ENCODE measurements at regions of chr2 and their contacts with region 1.

Region 1: GRCh38 chr2:161063157-161063954 is 96.9 kb upstream of the TANK start:
- DNase-seq: peak; percentile 86
- H3K4me3 Mint-ChIP-seq: no peak overlapping the region
- H3K27ac Mint-ChIP-seq: no peak overlapping the region
- H3K4me1 Mint-ChIP-seq: peaks cover 6% of the 10 kb centered on the region
- H3K27me3 Mint-ChIP-seq: no peaks in the 10 kb centered on the region
- CTCF ChIP-seq: peak; percentile 86

Region 2: DNA sequence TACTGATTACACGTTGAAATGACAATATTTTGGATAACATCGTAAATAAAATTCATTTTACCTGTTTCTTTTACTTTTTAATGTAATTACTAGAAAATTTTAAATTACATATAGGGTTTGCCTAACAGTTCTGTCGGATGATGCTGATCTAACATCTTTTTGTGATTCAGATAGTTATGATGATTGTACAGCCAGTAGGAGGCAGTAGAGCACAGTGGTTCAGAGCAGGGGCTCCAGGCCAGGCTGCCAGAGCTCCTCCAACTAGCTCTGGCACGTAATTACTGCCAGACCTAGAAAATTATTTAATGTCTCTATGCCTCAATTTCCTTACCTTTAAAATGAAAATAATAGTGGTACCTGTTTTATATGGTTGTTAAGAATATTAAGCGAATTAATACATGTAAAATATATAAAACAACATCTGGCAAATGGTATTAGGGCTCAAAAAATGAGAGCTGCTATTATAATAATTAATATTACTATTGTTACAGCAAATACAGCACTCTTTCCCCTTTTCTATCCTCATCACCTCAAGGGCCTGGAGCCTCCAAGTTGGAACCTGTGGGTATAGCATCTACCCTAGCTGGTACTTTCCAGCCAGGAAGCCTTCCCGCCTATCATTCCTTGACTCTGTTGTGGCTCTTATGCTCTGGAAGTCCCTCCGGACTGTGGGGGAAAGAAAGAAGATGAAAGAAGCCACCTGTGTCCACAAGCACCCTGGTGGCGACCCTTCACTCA is 953.3 kb before region 1 on chr2:
- CTCF ChIA-PET with region 1: interaction called, 4 read pairs
- POLR2A ChIA-PET with region 1: no interaction called
- intact Hi-C with region 1: loop called (anchors 2 kb)
- DNase-seq: peak; percentile 82
- H3K4me3 Mint-ChIP-seq: no peak overlapping the region
- H3K27ac Mint-ChIP-seq: peak overlapping the region; percentile 82
- H3K4me1 Mint-ChIP-seq: peaks cover 17% of the 10 kb centered on the region
- H3K27me3 Mint-ChIP-seq: no peaks in the 10 kb centered on the region
- CTCF ChIP-seq: peak; percentile 80

Region 3: DNA sequence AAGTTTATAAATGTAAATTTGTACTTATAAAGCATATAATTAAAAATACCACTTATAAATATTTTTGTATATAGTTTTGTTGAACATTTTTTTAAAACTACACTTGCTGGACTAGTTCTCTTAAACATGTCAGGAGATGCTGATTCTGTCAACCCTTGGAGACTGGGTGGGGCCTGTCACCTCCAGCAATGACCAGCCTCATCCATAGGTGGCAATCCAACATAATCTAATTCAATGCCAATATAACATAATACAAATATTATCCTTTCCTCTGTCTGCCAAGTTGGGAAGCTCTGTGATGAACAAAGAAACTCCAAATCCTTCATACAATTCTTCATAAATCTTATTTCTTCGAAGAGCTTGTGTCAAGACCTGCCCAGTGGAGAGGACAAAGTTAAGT is 710.2 kb before region 1 on chr2:
- CTCF ChIA-PET with region 1: interaction called, 11 read pairs
- POLR2A ChIA-PET with region 1: no interaction called
- intact Hi-C with region 1: no loop called
- DNase-seq: peak; percentile 54
- H3K4me3 Mint-ChIP-seq: no peak overlapping the region
- H3K27ac Mint-ChIP-seq: peak overlapping the region; percentile 38
- H3K4me1 Mint-ChIP-seq: peaks cover 63% of the 10 kb centered on the region
- H3K27me3 Mint-ChIP-seq: no peaks in the 10 kb centered on the region
- CTCF ChIP-seq: peak; percentile 40

Region 4: GRCh38 chr2:160756481-160756880 is 306.9 kb before region 1 on chr2:
- CTCF ChIA-PET with region 1: no interaction called
- POLR2A ChIA-PET with region 1: no interaction called
- intact Hi-C with region 1: no loop called
- DNase-seq: no peak
- H3K4me3 Mint-ChIP-seq: no peak overlapping the region
- H3K27ac Mint-ChIP-seq: no peak overlapping the region
- H3K4me1 Mint-ChIP-seq: peaks cover 8% of the 10 kb centered on the region
- H3K27me3 Mint-ChIP-seq: no peaks in the 10 kb centered on the region
- CTCF ChIP-seq: no peak

Region 5: DNA sequence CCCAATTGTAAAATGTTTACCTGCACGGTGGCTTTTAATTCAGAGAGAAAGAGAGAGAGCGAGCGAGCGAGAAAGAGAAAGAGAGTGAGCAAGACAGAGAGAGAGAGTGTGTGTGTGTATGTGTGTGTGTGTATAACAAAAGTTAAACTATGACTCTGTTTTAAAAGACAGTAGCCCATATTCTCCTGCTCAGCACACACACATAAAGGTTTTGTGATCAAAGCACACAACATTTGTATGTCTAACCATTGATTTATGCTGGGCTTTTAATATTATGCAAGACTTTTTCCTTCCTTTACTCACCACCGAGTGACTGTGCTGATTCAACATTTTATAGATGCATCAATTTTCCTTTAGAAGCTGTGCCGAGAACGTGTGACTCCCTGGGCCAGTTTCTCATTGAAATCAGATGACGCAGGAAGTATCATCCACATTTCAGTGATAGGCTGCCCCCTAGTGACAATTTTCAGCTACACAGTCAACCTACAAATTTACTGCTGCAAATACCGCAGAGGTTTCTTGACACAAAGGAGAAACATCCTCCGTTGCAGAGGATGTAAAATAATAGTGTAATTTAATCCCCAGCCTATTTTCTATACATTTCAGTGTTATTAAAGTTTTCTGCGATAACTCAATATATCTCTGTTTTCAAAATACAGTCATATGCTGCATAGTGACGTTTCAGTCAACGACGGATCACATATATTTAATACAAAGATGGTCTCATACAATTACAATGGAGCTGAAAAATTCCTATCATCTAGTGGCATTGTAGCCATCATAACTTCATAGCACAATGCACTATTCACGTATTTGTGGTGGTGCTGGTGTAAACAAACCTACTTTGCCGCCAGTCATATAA is 69.0 kb before region 1 on chr2:
- CTCF ChIA-PET with region 1: interaction called, 30 read pairs
- POLR2A ChIA-PET with region 1: interaction called, 3 read pairs
- intact Hi-C with region 1: loop called (anchors 2 kb)
- DNase-seq: peak; percentile 87
- H3K4me3 Mint-ChIP-seq: no peak overlapping the region
- H3K27ac Mint-ChIP-seq: no peak overlapping the region
- H3K4me1 Mint-ChIP-seq: peaks cover 9% of the 10 kb centered on the region
- H3K27me3 Mint-ChIP-seq: no peaks in the 10 kb centered on the region
- CTCF ChIP-seq: peak; percentile 76

Region 6: GRCh38 chr2:161030260-161031063 is 32.9 kb before region 1 on chr2:
- CTCF ChIA-PET with region 1: interaction called, 20 read pairs
- POLR2A ChIA-PET with region 1: interaction called, 4 read pairs
- intact Hi-C with region 1: no loop called
- DNase-seq: peak; percentile 97
- H3K4me3 Mint-ChIP-seq: peak overlapping the region; percentile 0
- H3K27ac Mint-ChIP-seq: peak overlapping the region; percentile 84
- H3K4me1 Mint-ChIP-seq: peaks cover 24% of the 10 kb centered on the region
- H3K27me3 Mint-ChIP-seq: no peaks in the 10 kb centered on the region
- CTCF ChIP-seq: no peak

Region 7: GRCh38 chr2:161052214-161052613 is 11.1 kb before region 1 on chr2:
- CTCF ChIA-PET with region 1: interaction called, 18 read pairs
- POLR2A ChIA-PET with region 1: no interaction called
- intact Hi-C with region 1: no loop called
- DNase-seq: no peak
- H3K4me3 Mint-ChIP-seq: no peak overlapping the region
- H3K27ac Mint-ChIP-seq: no peak overlapping the region
- H3K4me1 Mint-ChIP-seq: no peaks in the 10 kb centered on the region
- H3K27me3 Mint-ChIP-seq: peaks cover 13% of the 10 kb centered on the region
- CTCF ChIP-seq: no peak

Region 8: DNA sequence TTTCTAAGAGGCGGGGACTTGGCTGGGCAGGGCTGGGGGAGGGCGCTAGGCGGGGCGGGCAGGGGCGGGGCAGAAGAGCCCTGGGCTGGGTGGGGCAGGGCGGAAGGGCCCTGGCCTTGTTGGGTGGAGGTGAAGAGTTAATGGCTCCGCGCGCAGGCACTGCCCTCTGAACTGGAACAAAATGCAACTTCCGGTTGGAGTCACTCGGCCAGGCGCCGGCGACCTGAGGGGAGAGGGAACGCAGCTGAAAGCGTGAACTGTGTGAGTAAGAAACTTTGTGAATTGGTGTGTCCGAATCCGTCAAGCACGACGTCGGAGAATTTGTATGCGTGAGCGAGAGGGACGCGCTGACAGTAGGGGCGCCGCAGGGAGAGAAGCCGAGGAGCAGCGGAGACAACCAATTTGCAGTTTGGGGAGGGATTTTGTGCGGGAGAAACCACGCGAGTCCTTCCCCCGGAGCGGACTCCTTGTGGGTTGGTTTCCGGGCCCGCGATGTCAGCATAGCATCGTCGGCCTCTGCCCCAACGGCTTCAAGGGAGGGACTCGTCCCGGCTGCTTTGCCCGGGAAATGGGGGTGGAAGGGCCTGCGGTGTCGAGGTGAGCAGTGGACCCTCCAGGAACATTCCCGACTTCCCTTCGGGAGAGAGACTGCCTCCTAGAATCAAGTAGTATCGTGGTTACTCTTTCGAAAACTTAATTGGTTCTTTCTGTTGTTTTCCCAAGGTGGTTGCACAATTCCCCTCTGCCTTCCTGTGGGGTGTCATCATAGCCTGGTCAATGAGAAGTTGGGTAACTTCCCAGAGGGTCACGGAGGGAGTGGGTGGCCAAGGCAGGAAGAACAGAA is 97.1 kb after region 1 on chr2 and contains the start of gene TANK:
- CTCF ChIA-PET with region 1: interaction called, 7 read pairs
- POLR2A ChIA-PET with region 1: interaction called, 8 read pairs
- intact Hi-C with region 1: loop called (anchors 2 kb)
- DNase-seq: peak; percentile 99
- H3K4me3 Mint-ChIP-seq: peak within 1 kb of the TSS; percentile 86
- H3K27ac Mint-ChIP-seq: peak within 1 kb of the TSS; percentile 99
- H3K4me1 Mint-ChIP-seq: peaks cover 20% of the 10 kb centered on the region
- H3K27me3 Mint-ChIP-seq: no peaks in the 10 kb centered on the region
- CTCF ChIP-seq: no peak
- total RNA-seq, gene TANK: 62.0 and 79.6 TPM in 2 replicates

Measured in MCF 10A (cell line).